ENCODE measurements at regions of chr13 and their contacts with region 1.

Region 1: DNA sequence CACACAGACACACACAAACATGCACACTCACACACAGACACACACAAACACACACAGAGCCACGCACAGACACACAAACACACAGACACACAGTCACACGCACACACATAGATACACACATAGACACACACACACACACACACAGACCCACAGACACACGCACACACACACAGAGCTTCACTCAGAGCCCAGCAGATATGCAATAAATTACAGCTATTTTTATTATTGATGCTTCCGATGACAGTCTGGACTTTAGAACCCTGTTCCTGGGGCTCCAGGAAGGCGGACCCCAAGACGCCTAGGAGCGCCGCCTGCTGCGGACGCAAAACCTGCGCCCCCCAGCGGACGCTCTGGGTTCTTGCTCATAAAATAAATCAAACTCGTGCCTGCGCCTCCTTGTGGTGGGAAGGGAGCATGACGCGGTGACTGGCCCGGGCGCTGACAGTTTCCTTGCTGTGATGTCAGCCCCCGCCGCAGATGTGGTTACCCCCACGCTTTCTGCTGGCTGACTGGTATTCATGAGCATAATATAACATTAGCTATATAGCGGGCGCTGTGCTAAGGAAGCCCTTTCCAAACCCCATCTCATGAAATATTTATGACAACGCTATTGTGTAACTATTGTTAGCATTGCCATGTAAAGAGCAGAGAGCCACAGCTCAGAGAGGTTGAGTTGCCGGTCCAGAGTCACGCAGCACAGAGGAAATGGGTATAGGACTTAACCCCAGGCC is 64.4 kb upstream of the TM9SF2 start:
- DNase-seq: peak; percentile 98
- ATAC-seq: peak; percentile 70
- H3K4me3 Mint-ChIP-seq: peak overlapping the region; percentile 25
- H3K27ac Mint-ChIP-seq: peak overlapping the region; percentile 58
- H3K4me1 Mint-ChIP-seq: peaks cover 61% of the 10 kb centered on the region
- H3K27me3 Mint-ChIP-seq: peaks cover 22% of the 10 kb centered on the region

Region 2: GRCh38 chr13:99176309-99177276 is 260.3 kb before region 1 on chr13:
- CTCF ChIA-PET with region 1: interaction called, 48 read pairs
- POLR2A ChIA-PET with region 1: no interaction called
- DNase-seq: peak; percentile 88
- ATAC-seq: peak; percentile 93
- H3K4me3 Mint-ChIP-seq: peak overlapping the region; percentile 35
- H3K27ac Mint-ChIP-seq: peak overlapping the region; percentile 28
- H3K4me1 Mint-ChIP-seq: peaks cover 38% of the 10 kb centered on the region
- H3K27me3 Mint-ChIP-seq: peaks cover 5% of the 10 kb centered on the region

Region 3: DNA sequence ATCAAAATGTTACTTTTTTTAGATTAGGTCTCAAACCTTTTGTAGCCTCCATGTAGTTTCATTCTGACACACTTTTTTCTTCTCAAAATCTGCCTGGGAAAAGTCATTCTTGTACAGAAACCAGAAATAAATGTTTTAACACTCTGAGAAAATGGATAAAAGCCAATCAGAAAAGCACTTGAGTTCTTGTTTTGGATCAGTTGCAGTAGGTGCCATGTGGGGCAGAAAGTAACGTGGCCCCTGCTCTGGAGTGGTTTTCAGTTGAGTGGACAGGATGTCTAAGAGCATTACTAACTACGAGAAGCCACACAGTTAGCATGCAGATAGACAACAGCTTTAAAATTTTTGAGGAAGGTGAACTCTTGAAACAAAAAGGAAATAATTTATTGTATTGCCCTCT is 148.8 kb before region 1 on chr13:
- CTCF ChIA-PET with region 1: interaction called, 12 read pairs
- POLR2A ChIA-PET with region 1: interaction called, 4 read pairs
- DNase-seq: peak; percentile 50
- ATAC-seq: peak; percentile 62
- H3K4me3 Mint-ChIP-seq: no peak overlapping the region
- H3K27ac Mint-ChIP-seq: peak overlapping the region; percentile 48
- H3K4me1 Mint-ChIP-seq: peaks cover 76% of the 10 kb centered on the region
- H3K27me3 Mint-ChIP-seq: no peaks in the 10 kb centered on the region

Region 4: GRCh38 chr13:99356158-99357091 is 80.4 kb before region 1 on chr13:
- CTCF ChIA-PET with region 1: interaction called, 32 read pairs
- POLR2A ChIA-PET with region 1: interaction called, 5 read pairs
- DNase-seq: peak; percentile 86
- ATAC-seq: peak; percentile 81
- H3K4me3 Mint-ChIP-seq: peak overlapping the region; percentile 39
- H3K27ac Mint-ChIP-seq: peak overlapping the region; percentile 89
- H3K4me1 Mint-ChIP-seq: peaks cover 96% of the 10 kb centered on the region
- H3K27me3 Mint-ChIP-seq: no peaks in the 10 kb centered on the region

Region 5: DNA sequence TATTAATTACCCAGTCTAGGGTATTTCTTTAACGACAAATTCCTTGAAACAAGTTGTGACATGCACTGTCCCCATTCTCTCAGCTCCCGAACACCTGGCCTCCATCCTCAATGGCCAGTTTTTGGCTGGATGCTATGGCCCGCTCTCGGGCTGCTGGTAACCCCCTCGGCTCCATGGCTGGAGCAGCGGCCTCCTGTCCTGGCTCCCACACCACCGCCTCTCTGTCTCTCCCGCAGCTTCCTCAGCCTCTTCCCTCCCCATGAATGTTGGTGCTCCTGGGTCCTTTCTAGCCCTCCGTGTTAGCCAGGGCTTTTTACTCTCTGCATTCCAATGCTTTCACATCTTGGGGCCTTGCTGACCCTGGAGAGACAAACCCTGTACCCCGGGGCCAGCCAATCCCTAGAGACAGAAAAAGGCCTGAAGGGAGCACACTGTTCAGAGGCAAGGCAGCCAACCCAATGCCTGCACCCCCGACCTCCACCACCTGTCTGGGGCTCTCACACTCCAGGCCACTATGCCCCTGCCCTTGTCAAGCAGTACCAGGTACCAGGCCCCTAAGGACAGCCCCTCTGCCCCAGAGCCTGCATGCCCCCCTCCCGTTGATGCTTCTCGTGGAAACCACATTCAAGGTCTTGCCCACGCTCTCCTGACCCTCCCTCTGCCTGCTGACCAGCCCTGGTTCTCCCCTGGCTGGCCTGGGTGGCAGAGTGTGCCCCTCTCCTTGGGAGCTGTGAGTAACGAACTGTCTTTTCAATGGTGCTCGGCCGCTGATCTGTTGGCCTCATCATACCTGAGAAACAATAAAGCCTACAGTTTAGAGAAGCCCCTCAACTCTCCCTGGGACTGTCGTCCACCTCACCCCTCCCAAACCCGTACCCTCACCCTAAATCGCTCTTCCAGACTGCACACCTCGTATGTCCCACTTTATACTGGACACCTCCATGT is 42.8 kb before region 1 on chr13:
- CTCF ChIA-PET with region 1: interaction called, 23 read pairs
- POLR2A ChIA-PET with region 1: no interaction called
- DNase-seq: no peak
- ATAC-seq: no peak
- H3K4me3 Mint-ChIP-seq: no peak overlapping the region
- H3K27ac Mint-ChIP-seq: no peak overlapping the region
- H3K4me1 Mint-ChIP-seq: peaks cover 6% of the 10 kb centered on the region
- H3K27me3 Mint-ChIP-seq: no peaks in the 10 kb centered on the region

Region 6: GRCh38 chr13:99425485-99426341 is 11.1 kb before region 1 on chr13:
- CTCF ChIA-PET with region 1: interaction called, 170 read pairs
- POLR2A ChIA-PET with region 1: interaction called, 7 read pairs
- DNase-seq: peak; percentile 78
- ATAC-seq: peak; percentile 64
- H3K4me3 Mint-ChIP-seq: peak overlapping the region; percentile 64
- H3K27ac Mint-ChIP-seq: peak overlapping the region; percentile 89
- H3K4me1 Mint-ChIP-seq: peaks cover 75% of the 10 kb centered on the region
- H3K27me3 Mint-ChIP-seq: no peaks in the 10 kb centered on the region